ENCODE measurements at regions of chr1 and their contacts with region 1.

Region 1: DNA sequence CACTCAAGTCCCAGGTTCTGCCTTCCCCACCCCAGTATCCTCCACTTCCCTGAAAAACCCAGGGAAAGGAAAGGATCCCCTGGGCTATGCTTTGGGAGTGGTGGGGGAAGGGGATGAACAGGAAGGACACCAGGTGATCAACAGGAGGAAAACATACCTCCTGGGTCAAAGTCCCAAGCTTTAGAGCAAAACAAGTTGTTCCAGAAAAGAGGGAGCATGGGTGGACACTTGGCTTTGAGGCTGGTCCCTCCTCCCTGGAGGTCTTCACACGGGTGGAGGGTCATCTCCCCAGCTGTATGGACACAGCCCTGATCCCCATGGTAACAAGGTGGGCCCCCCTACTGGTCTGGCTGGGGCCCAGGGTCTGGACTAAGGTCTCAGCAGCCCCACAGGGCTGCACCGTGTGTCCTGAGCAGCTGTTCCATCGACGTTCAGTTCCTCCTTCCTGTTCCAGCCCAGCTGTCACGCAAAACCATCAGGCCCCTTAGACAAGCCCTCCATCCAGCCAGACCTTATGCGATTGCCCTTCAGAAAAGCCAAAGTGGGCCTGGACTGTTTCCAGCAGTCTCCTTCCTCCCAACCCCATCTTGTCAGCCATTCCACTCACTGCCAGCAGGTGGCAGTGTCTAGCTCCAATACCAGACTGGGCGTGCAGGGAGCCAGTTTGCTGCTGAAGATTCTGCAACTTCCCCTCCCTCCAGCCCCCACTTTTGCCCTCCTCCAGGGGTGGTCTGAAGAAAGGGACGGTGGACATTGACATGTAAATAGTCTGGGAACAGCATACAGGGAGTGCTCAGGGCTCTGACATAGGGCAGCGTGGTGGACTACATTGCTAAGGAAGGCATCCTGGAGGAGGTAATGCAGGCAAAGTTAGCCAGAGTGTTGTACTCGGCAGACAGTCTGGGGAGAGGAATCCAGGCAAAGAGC is 2.9 kb upstream of the PDZK1IP1 start:
- DNase-seq: peak; percentile 91
- ATAC-seq: peak; percentile 75
- H3K4me3 ChIP-seq: peak overlapping the region; percentile 41 to 66 (median 53); a peak in 5 of 6 replicates
- H3K27ac ChIP-seq: peak overlapping the region; percentile 92
- H3K4me1 ChIP-seq: peaks cover 74% of the 10 kb centered on the region
- H3K27me3 ChIP-seq: no peaks in the 10 kb centered on the region
- CTCF ChIP-seq: peak; percentile 98
- EP300 ChIP-seq: peak in 1 of 2 experiments; percentile 71; a peak in 2 of 4 replicates
- POLR2A ChIP-seq: peak; percentile 67 to 76
- RAD21 ChIP-seq: peak; percentile 89

Region 2: DNA sequence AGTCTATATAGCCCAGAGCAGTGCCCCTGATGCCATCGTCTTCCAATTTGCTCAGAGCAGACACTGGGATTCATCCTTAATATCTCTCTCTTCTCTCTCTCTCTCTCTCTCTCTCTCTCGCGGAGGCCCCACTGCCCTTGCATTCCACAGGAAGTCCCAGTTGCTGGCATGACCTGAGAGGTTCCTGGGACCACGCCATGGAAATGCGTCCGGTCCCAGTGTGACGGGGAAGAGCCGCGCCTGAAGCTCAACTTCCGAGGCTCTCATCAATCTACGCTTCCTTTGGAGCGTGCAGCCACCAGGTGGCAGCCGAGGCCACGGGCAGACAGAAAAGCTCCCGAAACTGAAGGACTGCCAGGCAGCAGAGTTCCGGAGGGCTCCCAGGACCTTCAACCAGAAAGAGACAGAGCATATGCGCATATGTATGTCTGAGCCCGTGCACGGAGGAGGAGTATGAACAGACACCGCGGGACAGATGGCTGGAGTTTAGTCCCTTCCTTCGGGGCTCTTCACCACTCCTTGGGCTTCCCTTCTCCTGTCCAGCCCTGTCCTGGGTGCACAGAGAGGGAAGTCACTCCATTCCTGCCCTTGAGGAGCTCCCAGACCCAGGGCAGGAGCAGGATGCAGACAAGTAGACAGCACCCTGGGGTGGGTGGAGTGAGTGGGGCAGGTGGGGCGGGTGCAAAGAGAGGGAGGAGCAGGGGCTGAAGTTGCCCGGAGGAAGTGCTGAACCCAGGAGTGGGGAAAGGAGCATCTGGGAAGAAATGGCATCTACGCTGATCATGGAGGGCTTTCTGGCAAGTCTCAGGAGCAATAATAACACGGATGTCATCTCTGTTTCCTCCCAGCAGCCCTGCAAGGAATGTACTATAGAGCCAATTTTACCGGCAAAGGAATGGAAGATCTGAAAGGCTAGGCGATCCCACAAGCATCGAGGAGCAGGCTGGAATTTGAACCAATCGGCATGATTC is 13.4 kb before region 1 on chr1:
- CTCF ChIA-PET with region 1: interaction called, 10 read pairs
- POLR2A ChIA-PET with region 1: interaction called, 168 read pairs
- in situ Hi-C with region 1: no loop called
- intact Hi-C with region 1: no loop called
- DNase-seq: peak; percentile 89
- ATAC-seq: peak; percentile 68
- H3K4me3 ChIP-seq: peak overlapping the region; percentile 53 to 76 (median 65)
- H3K27ac ChIP-seq: peak overlapping the region; percentile 16
- H3K4me1 ChIP-seq: peaks cover 79% of the 10 kb centered on the region
- H3K27me3 ChIP-seq: no peaks in the 10 kb centered on the region; a peak in 1 of 5 replicates
- CTCF ChIP-seq: peak; percentile 99
- EP300 ChIP-seq: no peak
- POLR2A ChIP-seq: no peak
- RAD21 ChIP-seq: peak; percentile 97

Region 3: DNA sequence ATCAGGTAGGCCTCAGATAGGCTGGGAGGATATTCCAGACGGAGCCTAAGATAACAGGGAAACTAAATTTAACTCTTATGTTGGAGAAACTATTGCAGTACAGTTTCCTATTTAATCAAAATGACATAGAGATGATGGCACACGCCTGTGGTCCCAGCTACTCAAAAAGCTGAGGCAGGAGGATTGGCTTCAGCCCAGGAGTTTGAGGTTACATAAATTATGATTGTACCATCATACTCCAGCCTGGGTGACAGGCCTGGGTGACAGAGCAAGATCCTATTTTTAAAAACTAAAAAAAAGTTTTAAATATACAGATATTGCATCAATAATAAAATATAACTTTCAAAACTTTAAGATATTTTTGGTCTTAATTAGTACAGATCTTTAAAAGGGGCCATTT is 64.5 kb after region 1 on chr1:
- CTCF ChIA-PET with region 1: interaction called, 28 read pairs
- POLR2A ChIA-PET with region 1: interaction called, 10 read pairs
- in situ Hi-C with region 1: loop called (anchors 5 kb)
- intact Hi-C with region 1: no loop called
- DNase-seq: no peak
- ATAC-seq: no peak
- H3K4me3 ChIP-seq: no peak overlapping the region
- H3K27ac ChIP-seq: no peak overlapping the region
- H3K4me1 ChIP-seq: peaks cover 27% of the 10 kb centered on the region
- H3K27me3 ChIP-seq: no peaks in the 10 kb centered on the region
- CTCF ChIP-seq: no peak
- EP300 ChIP-seq: no peak
- POLR2A ChIP-seq: no peak
- RAD21 ChIP-seq: no peak

Region 4: GRCh38 chr1:47262787-47263413 is 70.2 kb after region 1 on chr1:
- CTCF ChIA-PET with region 1: interaction called, 28 read pairs
- POLR2A ChIA-PET with region 1: interaction called, 8 read pairs
- in situ Hi-C with region 1: loop called (anchors 5 kb)
- intact Hi-C with region 1: loop called (anchors 1 kb)
- DNase-seq: peak; percentile 59
- ATAC-seq: peak; percentile 69
- H3K4me3 ChIP-seq: no peak overlapping the region
- H3K27ac ChIP-seq: no peak overlapping the region
- H3K4me1 ChIP-seq: no peaks in the 10 kb centered on the region
- H3K27me3 ChIP-seq: no peaks in the 10 kb centered on the region
- CTCF ChIP-seq: peak; percentile 78
- EP300 ChIP-seq: no peak
- POLR2A ChIP-seq: no peak
- RAD21 ChIP-seq: peak; percentile 75

Region 5: DNA sequence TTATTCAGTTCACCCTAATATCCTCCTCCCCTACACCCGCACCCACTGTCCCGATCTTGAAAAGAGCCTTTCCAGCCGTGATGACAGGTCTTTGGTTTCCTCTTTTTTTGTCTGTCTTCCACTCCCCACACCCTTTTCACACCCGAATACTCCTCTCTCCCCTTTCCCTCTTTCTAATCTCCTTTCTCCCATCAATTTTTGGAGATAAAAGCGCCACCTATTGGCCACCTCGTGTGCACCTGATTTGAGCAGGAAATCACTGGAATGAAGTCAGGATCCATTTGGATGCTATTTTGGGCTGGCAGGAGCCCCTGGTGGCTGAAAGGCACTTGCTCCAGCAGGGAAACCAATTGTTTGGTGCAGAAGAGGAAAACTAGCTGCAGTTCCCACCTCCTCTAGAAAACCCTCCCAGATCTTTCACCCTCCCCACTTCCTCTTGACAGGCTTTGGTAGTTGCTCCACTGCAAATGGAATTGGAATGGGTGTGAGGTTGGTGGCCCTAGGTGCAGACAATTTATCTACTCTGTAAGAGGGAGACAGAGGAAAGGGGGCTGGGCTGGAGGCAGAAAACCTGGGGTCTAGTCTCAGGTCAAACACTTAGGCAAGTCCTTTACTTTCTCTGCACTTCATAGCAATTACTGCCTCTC is 231.7 kb after region 1 on chr1:
- CTCF ChIA-PET with region 1: no interaction called
- POLR2A ChIA-PET with region 1: no interaction called
- in situ Hi-C with region 1: no loop called
- intact Hi-C with region 1: loop called (anchors 5 kb)
- DNase-seq: peak; percentile 52
- ATAC-seq: peak; percentile 86
- H3K4me3 ChIP-seq: no peak overlapping the region
- H3K27ac ChIP-seq: no peak overlapping the region
- H3K4me1 ChIP-seq: no peaks in the 10 kb centered on the region
- H3K27me3 ChIP-seq: no peaks in the 10 kb centered on the region; a peak in 1 of 5 replicates
- CTCF ChIP-seq: peak; percentile 78
- EP300 ChIP-seq: no peak
- POLR2A ChIP-seq: no peak
- RAD21 ChIP-seq: peak; percentile 41; the same call in 1 of the 2 replicates

Region 6: DNA sequence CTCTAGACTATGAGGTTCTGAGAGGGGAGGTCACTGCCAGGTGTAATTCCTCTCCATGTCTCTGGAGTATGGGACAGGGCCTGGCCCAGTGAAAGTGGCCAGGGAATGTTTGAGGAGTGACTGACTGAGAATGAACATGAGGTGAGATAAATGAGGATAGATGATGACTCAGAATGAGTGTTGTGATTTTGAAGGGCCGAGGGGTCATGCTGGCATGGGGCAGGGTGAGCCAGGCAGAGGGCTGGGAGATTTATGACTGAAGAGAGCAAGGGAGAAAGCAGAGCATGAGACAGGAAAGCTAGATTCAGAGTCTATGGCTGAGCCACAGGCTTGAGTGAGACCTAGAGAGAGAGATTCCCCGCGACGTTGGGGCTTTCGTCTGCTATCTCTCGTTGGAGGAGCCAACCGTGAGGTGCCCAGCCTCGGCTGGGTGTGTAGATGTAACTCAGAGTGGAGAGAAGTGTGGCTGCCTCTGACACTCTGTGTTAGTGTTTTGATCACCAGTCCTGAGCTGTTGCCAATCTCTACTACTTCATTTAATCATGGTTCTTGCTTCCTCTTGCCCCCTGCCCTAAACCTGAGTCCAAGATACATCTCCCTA is 295.2 kb after region 1 on chr1:
- CTCF ChIA-PET with region 1: no interaction called
- POLR2A ChIA-PET with region 1: no interaction called
- in situ Hi-C with region 1: no loop called
- intact Hi-C with region 1: no loop called
- DNase-seq: no peak
- ATAC-seq: no peak
- H3K4me3 ChIP-seq: no peak overlapping the region
- H3K27ac ChIP-seq: no peak overlapping the region
- H3K4me1 ChIP-seq: no peaks in the 10 kb centered on the region
- H3K27me3 ChIP-seq: peaks cover 8 to 97% of the 10 kb centered on the region in 2 experiments; a peak in 4 of 5 replicates
- CTCF ChIP-seq: no peak
- EP300 ChIP-seq: no peak
- POLR2A ChIP-seq: no peak
- RAD21 ChIP-seq: no peak

Measured in HepG2 (cell line).